SK-N-SH (cell line): ENCODE measurements at regions of chr4 and their contacts with region 1.

Region 1: DNA sequence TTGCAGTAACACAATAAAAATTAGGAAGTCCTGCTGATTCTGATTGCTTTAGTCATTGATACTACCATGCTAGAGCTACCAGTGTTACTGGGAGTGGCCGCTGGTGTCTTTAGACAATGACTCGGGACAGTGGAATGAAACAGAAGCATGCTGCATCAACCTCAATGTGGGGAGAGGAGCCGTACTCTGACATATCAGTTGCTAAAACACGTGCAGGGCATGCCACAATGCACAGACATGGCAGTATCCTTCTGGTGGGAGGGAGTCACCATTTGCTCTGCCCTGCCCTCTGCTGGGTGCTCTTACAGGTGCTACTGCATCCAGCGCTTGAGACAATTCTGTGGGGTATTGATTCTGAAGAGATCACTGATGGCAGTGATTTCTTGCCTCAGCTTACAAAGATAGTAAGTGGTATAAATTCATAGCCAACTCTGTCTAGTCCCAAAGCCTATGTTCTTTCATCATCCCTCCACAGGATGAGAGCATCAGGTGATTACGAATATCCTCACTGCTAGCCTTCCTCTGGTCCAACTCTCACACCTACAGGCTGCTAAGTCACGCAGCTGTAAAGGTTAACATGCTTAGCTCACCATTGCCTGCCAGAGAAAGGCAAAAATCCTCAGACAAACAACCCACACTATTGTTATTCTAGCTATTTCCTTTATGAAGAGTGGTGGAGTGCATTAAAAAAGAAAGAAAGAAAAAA is 43.7 kb downstream of the NSG1 start:
- DNase-seq: peak; percentile 77
- H3K4me3 ChIP-seq: peak overlapping the region in 1 of 2 experiments; percentile 35; a peak in 1 of 4 replicates
- H3K27ac ChIP-seq: no peak overlapping the region
- H3K4me1 ChIP-seq: peaks cover 0 to 3% of the 10 kb centered on the region in 2 experiments; a peak in 1 of 4 replicates
- H3K27me3 ChIP-seq: no peaks in the 10 kb centered on the region
- CTCF ChIP-seq: peak; percentile 79
- EP300 ChIP-seq: no peak
- RAD21 ChIP-seq: peak; percentile 69

Region 2: GRCh38 chr4:3701251-3701734 is 729.4 kb before region 1 on chr4:
- CTCF ChIA-PET with region 1: no interaction called
- POLR2A ChIA-PET with region 1: no interaction called
- DNase-seq: no peak
- H3K4me3 ChIP-seq: no peak overlapping the region
- H3K27ac ChIP-seq: no peak overlapping the region
- H3K4me1 ChIP-seq: peaks cover 0 to 38% of the 10 kb centered on the region in 2 experiments; a peak in 1 of 4 replicates
- H3K27me3 ChIP-seq: no peaks in the 10 kb centered on the region
- CTCF ChIP-seq: no peak
- EP300 ChIP-seq: no peak
- RAD21 ChIP-seq: no peak

Region 3: DNA sequence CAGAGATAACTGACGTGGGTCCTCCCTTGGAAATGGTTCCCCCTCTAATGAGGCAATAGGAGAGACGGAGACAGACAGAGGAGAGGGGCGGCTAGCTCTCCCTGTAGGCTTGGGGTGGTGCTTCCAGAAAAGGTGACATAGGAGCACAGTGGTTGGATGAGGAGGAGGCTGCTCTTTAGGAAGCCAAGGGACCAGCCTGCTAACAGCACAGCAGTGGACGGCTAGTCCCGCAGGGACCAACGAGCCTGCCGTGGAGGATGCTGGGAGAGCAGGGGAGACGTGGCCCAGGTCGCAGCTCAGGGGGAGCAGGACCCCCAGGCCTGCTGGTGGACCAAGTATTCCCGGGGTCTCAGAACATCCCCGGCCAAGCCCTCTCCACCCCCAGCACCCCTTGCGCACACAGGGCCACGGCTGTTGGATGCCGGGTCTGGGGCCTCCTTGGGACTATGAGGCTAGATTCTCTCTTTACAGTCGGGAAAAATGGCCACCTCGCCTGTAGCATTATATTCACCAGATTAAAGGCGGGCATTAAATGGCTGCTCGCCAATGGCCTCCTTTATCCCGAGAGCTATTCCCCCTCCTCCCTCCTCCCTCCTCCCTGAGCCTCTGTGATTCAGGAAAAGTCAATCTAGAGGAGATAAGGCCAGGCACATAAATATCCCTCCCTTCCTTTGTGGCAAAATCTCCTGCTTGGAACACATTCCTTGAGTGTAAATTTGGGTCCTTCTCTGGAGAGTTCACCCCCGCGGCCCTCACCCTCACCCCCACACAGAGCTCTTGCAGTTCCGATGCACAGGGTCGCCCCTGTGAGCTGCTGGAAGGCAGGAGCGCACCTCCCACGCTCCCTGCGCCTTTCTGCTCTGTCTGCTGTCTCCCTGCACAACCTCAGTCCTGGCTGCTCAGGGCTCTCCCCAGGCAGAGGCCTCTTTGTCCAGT is 74.3 kb before region 1 on chr4:
- CTCF ChIA-PET with region 1: no interaction called
- POLR2A ChIA-PET with region 1: no interaction called
- DNase-seq: no peak
- H3K4me3 ChIP-seq: no peak overlapping the region
- H3K27ac ChIP-seq: no peak overlapping the region
- H3K4me1 ChIP-seq: no peaks in the 10 kb centered on the region
- H3K27me3 ChIP-seq: peaks cover 5% of the 10 kb centered on the region; the same call in 1 of the 2 replicates
- CTCF ChIP-seq: no peak
- EP300 ChIP-seq: no peak
- RAD21 ChIP-seq: no peak

Region 4: DNA sequence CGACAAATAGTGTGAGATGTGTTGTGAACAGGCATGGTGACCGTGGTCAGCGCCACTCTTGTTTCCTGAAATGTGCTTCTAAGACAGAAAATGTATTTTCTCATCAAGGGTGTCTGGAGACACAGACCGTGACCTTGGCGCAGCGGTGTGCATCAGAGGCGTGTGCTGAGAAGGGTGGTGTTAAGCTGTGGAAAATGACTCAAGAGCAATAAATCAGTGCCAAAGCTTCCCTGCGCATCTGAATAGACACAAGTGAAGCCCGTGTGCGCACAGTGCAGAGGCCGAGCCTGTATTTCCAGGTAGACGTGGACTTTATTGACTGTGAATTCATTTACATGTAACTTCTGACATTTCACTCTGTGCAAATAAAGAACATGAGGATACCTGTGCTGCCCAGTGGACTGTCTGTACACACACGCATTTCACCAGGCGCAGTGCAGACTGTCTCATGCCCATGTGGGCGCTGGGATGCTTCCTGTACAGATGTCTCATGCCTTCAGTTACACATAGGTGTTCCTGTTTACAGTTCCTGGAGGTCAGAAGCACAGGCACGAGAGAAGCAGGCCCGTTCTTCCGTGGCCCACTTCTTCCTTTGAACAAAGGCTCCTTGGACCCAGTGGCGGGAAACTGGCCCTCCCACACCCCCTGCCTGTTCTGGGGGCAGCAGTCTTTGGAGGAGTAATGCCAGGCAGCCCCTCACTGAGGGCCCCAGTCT is 11.8 kb before region 1 on chr4:
- CTCF ChIA-PET with region 1: interaction called, 22 read pairs
- POLR2A ChIA-PET with region 1: no interaction called
- DNase-seq: no peak
- H3K4me3 ChIP-seq: no peak overlapping the region
- H3K27ac ChIP-seq: no peak overlapping the region
- H3K4me1 ChIP-seq: no peaks in the 10 kb centered on the region; a peak in 1 of 4 replicates
- H3K27me3 ChIP-seq: no peaks in the 10 kb centered on the region
- CTCF ChIP-seq: no peak
- EP300 ChIP-seq: no peak
- RAD21 ChIP-seq: no peak